Motor neuron (in vitro differentiated cells): ENCODE measurements at regions of chr1 and their contacts with region 1.

Region 1: GRCh38 chr1:18902523-18903290 is at the start of gene ALDH4A1:
- ATAC-seq: peak; percentile 90 to 97 (median 96)
- H3K4me3 ChIP-seq: peak within 1 kb of the TSS; percentile 47 to 76 (median 63)
- H3K27ac ChIP-seq: peak within 1 kb of the TSS; percentile 86 to 93
- H3K4me1 ChIP-seq: peaks cover 7 to 12% of the 10 kb centered on the region in 2 donors
- total RNA-seq, gene ALDH4A1: 3.0 to 57.5 (median 8.8) TPM

Region 2: DNA sequence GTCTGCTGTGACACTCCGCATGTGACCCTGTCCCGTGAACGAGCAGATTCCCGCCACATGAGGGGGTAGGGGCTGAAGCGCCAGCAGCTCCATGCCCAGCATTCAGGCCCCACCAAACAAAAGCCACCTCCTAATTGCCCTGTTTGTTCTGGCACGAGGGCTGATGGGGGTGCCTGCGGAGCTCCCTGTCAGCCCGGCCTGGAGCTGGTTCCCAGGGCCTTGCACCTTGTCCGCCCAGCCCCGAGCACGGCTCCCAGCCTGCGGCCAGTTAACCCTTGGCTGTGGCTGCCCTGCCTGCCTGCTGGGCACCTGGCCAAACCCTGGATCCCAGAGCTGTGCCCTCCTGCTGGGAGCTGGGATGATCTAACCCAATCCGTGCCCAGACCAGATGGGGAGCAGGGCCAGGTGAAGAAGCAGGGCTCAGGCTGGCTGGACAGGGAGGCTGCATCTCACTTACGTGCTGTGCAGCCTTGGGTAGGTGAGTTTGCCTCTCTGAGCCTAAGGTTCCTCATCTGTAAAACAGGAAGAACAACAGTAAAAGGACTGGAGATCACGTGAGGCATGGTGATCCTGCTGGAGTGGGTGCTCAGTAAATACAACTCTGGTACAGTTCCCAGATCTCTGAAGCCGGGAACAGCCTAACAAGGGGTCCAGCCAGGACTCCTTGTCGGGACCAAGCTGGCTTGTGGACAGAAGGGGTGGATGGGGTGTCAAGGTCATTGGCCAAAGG is 164.6 kb after region 1 on chr1:
- in situ Hi-C with region 1: loop called in 3 of 9 experiments (anchors 10 to 25 kb)
- ATAC-seq: peak in 6 of 8 experiments; percentile 10 to 87 (median 78)
- H3K4me3 ChIP-seq: no peak overlapping the region
- H3K27ac ChIP-seq: no peak overlapping the region
- H3K4me1 ChIP-seq: peaks cover 10 to 12% of the 10 kb centered on the region in 2 donors

Region 3: GRCh38 chr1:19074902-19075721 is 172.4 kb after region 1 on chr1:
- in situ Hi-C with region 1: loop called in 6 of 9 experiments (anchors 10 to 25 kb)
- ATAC-seq: peak in 2 of 8 experiments; percentile 8 to 9
- H3K4me3 ChIP-seq: no peak overlapping the region
- H3K27ac ChIP-seq: no peak overlapping the region
- H3K4me1 ChIP-seq: peaks cover 0 to 3% of the 10 kb centered on the region in 2 donors

Region 4: DNA sequence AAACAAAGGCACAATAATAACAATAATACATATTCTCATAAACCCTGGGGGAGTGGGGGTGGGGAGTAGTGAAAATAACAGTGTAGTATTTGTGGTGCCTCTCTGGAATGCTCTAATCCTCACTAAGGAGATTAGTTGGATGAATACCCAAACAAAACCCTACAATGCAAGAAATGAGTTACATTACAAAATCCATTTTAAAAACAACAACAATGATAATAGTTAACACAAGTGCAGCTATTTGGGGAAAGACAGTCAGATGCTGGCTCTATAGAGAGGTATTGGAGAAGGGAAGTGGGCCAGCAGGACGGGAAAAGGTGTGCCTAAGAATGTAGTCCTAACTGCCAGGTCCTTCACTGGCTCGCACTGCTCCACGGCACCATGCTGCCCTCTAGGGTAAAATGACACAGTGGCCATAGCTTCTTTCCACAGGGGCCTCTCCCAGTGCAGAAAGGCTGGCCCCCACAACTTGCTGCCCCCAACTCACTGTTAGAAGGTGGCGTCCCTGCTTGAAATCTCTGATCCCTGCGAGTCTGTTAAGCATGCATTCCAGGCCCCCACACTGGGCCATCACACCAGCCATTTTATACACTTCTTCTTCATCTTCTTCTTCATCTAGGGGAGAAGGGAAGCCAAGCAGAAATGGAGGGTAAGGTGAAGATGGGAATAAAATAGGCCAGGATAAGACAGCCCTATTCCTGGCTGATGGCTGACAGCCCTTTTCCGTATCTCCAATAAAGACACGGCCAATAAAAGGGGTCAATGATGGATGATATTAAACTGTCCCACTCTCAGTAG is 193.5 kb after region 1 on chr1:
- in situ Hi-C with region 1: loop called in 3 of 9 experiments (anchors 25 kb)
- ATAC-seq: peak in 6 of 8 experiments; percentile 23 to 60 (median 41)
- H3K4me3 ChIP-seq: no peak overlapping the region
- H3K27ac ChIP-seq: no peak overlapping the region
- H3K4me1 ChIP-seq: no peaks in the 10 kb centered on the region

Region 5: DNA sequence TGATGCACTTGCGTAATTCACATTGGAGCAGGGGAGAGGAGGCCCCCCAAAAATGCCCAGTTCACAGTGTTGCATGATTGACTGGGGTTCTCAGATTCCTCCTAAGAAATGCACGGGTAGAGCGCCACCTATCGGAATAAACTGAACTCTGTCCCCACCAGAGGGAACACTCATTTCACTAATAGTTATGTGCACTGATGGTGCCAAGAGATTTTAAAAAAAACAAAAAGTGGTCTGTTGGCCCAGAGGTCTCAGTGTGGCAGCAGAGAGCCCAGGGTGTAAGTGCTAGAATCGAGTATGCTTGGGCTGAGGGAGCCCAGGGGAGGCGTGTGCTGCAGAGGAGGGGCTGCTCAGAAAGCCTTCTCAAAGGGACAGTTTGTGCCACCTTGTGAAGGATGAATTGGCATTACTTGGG is 1737.5 kb after region 1 on chr1:
- in situ Hi-C with region 1: no loop called
- ATAC-seq: peak; percentile 39 to 90 (median 58)
- H3K4me3 ChIP-seq: no peak overlapping the region
- H3K27ac ChIP-seq: no peak overlapping the region
- H3K4me1 ChIP-seq: no peaks in the 10 kb centered on the region